PC-9 (cell line): ENCODE measurements at regions of chr12 and their contacts with region 1.

Region 1: GRCh38 chr12:50842637-50843493 is at the start of gene TMPRSS12:
- DNase-seq: peak; percentile 33 to 76
- H3K4me3 ChIP-seq: peak within 1 kb of the TSS; percentile 32; the same call in 1 of the 2 replicates
- H3K27ac ChIP-seq: peak within 1 kb of the TSS; percentile 57
- H3K4me1 ChIP-seq: peaks cover 8% of the 10 kb centered on the region
- H3K27me3 ChIP-seq: no peaks in the 10 kb centered on the region
- CTCF ChIP-seq: no peak
- total RNA-seq, gene TMPRSS12: not detected in 2 replicates

Region 2: DNA sequence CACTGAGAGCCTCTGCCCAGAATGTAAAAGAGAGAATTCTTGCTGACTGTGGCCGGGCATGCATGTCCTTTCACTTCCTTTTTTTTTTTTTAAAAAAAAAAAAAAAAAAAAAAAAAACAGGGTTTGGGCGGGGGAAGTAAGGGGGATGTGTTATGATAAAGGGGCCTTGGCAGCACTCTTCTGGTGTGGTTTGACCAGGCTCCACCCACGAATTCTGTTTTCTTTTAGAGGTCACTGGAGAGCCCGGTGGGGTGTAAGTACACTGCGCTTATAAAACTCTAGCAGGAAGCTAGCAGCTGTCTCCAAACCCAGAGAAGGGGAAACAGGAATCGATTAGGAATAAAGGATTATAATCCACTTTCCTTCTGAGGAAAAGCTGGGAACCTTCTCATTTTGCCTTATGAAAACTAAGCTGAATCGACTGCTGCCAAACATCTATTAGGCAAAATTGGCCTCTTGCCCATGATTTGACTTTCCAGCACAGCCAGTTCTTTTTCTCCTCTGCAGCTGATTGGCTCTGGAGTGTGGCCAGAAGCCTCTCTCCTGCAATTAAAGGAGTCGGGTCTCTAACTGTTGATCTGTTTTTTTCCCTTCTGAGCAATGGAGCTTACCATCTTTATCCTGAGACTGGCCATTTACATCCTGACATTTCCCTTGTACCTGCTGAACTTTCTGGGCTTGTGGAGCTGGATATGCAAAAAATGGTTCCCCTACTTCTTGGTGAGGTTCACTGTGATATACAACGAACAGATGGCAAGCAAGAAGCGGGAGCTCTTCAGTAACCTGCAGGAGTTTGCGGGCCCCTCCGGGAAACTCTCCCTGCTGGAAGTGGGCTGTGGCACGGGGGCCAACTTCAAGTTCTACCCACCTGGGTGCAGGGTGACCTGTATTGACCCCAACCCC is 81.8 kb after region 1 on chr12:
- CTCF ChIA-PET with region 1: no interaction called
- POLR2A ChIA-PET with region 1: no interaction called
- intact Hi-C with region 1: loop called (anchors 10 kb)
- DNase-seq: peak; percentile 44 to 72
- H3K4me3 ChIP-seq: peak overlapping the region; percentile 47; the same call in 1 of the 2 replicates
- H3K27ac ChIP-seq: no peak overlapping the region
- H3K4me1 ChIP-seq: peaks cover 19% of the 10 kb centered on the region
- H3K27me3 ChIP-seq: no peaks in the 10 kb centered on the region
- CTCF ChIP-seq: no peak